ENCODE measurements at regions of chr4 and their contacts with region 1.

Region 1: GRCh38 chr4:70778888-70779422 is 57.2 kb downstream of the RUFY3 start:
- DNase-seq: no peak
- ATAC-seq: no peak
- H3K4me3 ChIP-seq: no peak overlapping the region
- H3K4me3 Mint-ChIP-seq: no peak overlapping the region
- H3K27ac ChIP-seq: no peak overlapping the region
- H3K27ac Mint-ChIP-seq: no peak overlapping the region
- H3K4me1 ChIP-seq: no peaks in the 10 kb centered on the region
- H3K4me1 Mint-ChIP-seq: no peaks in the 10 kb centered on the region
- H3K27me3 ChIP-seq: no peaks in the 10 kb centered on the region
- H3K27me3 Mint-ChIP-seq: no peaks in the 10 kb centered on the region
- CTCF ChIP-seq: no peak

Region 2: GRCh38 chr4:70833675-70834074 is 54.7 kb after region 1 on chr4:
- intact Hi-C with region 1: loop called (anchors 5 kb)
- DNase-seq: no peak
- ATAC-seq: no peak
- H3K4me3 ChIP-seq: no peak overlapping the region
- H3K4me3 Mint-ChIP-seq: no peak overlapping the region
- H3K27ac ChIP-seq: no peak overlapping the region
- H3K27ac Mint-ChIP-seq: peak overlapping the region in 1 of 2 donors; percentile 18
- H3K4me1 ChIP-seq: peaks cover 19% of the 10 kb centered on the region
- H3K4me1 Mint-ChIP-seq: peaks cover 21 to 31% of the 10 kb centered on the region in 2 donors
- H3K27me3 ChIP-seq: no peaks in the 10 kb centered on the region
- H3K27me3 Mint-ChIP-seq: no peaks in the 10 kb centered on the region
- CTCF ChIP-seq: no peak